ENCODE measurements at regions of chr3 and their contacts with region 1.

Region 1: DNA sequence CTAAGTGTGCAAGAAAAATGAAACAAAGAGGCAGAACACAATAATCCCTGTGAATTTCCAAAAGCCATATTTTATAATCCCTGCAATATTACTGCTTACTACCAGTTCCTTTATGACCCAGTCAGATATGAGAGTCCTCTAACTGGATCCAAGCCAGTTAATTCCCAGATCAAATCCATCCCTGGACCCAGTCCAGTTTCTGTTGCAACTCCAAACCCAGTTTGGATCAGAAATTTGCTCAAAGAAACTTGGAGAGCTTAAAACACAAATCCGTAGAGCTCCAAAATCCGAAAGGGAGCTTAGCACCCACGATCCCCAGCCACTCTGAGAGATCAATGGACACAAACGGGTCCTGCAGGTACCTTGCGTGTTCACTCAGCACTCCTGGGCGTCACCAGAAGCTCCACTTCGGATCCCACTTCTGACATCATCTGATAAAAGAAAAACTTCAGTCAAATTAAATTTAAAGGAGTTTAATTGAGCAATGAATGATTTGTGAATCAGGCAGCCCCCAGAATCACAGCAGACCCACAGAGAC is 32.6 kb upstream of the THUMPD3 start:
- DNase-seq: no peak
- ATAC-seq: no peak
- H3K4me3 ChIP-seq: no peak overlapping the region
- H3K4me3 Mint-ChIP-seq: no peak overlapping the region
- H3K27ac ChIP-seq: no peak overlapping the region
- H3K27ac Mint-ChIP-seq: no peak overlapping the region
- H3K4me1 ChIP-seq: no peaks in the 10 kb centered on the region
- H3K4me1 Mint-ChIP-seq: no peaks in the 10 kb centered on the region
- H3K27me3 ChIP-seq: no peaks in the 10 kb centered on the region
- H3K27me3 Mint-ChIP-seq: peaks cover 16 to 37% of the 10 kb centered on the region in 2 donors
- CTCF ChIP-seq: no peak

Region 2: DNA sequence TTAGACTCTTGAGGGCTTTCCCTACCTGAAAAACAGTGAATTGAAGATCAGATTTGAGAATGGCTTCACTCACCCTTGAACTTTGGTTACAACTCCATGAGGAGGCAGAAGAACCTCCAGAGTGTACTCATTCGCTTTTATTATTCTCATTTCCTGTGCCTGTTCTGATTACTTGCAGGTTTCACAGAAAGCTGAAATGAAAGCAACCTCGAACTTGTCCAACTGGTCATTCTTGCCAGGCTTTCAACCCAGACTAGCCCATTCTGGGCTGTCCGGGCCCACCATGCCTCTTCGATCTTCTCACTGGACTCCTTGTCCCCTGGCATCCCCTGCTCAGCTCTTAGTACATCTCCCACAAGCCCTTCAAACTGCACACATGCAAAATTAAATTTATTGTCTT is 12.5 kb after region 1 on chr3:
- intact Hi-C with region 1: loop called (anchors 1 kb)
- DNase-seq: no peak
- ATAC-seq: no peak
- H3K4me3 ChIP-seq: no peak overlapping the region
- H3K4me3 Mint-ChIP-seq: no peak overlapping the region
- H3K27ac ChIP-seq: no peak overlapping the region
- H3K27ac Mint-ChIP-seq: no peak overlapping the region
- H3K4me1 ChIP-seq: no peaks in the 10 kb centered on the region
- H3K4me1 Mint-ChIP-seq: no peaks in the 10 kb centered on the region
- H3K27me3 ChIP-seq: no peaks in the 10 kb centered on the region
- H3K27me3 Mint-ChIP-seq: no peaks in the 10 kb centered on the region
- CTCF ChIP-seq: no peak